MCF 10A (cell line): ENCODE measurements at regions of chr7 and their contacts with region 1.

Region 1: DNA sequence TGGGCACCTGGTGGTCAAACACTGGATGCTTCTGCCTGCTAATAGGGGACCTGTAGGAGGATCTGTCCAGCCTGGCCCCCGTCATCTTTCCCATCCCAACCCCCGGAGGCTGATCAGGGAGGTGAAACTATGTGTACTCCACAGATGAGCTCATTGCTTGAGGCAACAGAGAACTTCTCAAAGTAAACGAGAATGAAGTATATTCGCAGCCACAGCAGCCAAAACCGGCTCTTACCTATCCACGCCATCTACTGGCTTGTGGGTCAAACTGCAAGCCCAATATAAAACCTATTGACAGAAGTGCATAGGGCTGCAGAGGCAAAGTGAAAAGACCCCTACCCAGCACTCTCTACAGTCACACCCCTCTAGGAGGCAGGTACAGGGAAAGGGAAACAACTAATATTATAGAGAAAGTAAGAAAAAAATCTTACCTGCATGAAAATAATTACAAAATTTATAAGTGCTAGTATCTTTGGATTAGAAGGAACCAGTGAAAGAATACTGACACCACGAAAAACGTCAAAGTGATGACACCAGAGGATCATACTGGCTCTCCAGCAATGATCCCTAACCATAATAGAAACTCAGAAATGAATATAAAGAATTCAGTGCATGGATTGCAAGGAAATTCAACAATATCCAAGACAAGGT is 973.5 kb downstream of the ANKRD7 start:
- DNase-seq: peak; percentile 56
- H3K4me3 Mint-ChIP-seq: no peak overlapping the region
- H3K27ac Mint-ChIP-seq: no peak overlapping the region
- H3K4me1 Mint-ChIP-seq: no peaks in the 10 kb centered on the region
- H3K27me3 Mint-ChIP-seq: peaks cover 68% of the 10 kb centered on the region
- CTCF ChIP-seq: peak; percentile 70

Region 2: DNA sequence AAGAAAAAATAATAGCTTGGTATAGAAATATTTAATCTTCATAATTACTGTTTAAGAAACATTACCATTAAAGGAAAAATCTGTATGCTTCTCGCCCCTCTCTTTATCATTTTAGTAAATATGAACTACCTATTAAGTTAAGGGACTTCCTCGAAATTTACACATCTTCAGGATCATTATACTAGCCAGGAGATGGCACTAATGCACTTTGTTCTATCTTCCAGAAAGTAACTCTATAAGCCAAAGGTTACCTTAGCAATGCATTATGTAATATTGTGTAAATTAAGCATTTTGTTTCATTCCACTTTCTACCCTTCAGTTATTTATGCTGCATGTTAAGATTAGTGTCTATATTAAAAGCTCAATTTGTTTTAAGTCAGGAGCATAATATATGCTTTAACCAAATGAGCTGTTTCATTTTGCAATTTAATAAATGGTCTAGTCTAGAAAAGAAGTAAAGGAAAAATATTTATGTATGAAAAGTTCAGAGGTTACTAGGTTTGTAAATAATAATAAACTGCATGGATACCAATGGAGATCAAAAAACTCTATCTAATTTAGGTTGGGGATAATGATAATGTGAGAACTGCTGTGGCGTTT is 845.0 kb before region 1 on chr7:
- CTCF ChIA-PET with region 1: interaction called, 7 read pairs
- POLR2A ChIA-PET with region 1: no interaction called
- intact Hi-C with region 1: loop called (anchors 1 kb)
- DNase-seq: peak; percentile 42
- H3K4me3 Mint-ChIP-seq: no peak overlapping the region
- H3K27ac Mint-ChIP-seq: no peak overlapping the region
- H3K4me1 Mint-ChIP-seq: peaks cover 6% of the 10 kb centered on the region
- H3K27me3 Mint-ChIP-seq: no peaks in the 10 kb centered on the region
- CTCF ChIP-seq: peak; percentile 46

Region 3: DNA sequence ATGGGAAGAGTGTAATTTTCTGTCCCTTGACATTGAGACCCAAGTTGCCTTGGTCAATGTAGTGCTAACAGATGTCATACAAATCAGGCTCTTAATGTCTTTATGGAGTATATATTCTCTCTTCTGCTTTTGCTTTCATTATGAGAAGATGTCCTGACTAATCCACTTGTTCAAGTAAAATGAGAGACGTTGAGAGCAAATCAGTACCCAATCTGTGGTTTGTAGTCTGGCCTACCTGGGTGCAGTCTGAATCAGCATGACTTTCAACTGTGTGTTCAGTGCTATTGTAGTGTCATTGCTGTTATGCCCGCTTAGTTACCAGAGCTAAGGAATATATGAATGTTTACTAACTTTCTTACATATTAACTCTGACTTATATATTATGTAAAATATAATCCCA is 361.1 kb before region 1 on chr7:
- CTCF ChIA-PET with region 1: no interaction called
- POLR2A ChIA-PET with region 1: no interaction called
- intact Hi-C with region 1: no loop called
- DNase-seq: no peak
- H3K4me3 Mint-ChIP-seq: no peak overlapping the region
- H3K27ac Mint-ChIP-seq: no peak overlapping the region
- H3K4me1 Mint-ChIP-seq: no peaks in the 10 kb centered on the region
- H3K27me3 Mint-ChIP-seq: peaks cover 30% of the 10 kb centered on the region
- CTCF ChIP-seq: no peak

Region 4: DNA sequence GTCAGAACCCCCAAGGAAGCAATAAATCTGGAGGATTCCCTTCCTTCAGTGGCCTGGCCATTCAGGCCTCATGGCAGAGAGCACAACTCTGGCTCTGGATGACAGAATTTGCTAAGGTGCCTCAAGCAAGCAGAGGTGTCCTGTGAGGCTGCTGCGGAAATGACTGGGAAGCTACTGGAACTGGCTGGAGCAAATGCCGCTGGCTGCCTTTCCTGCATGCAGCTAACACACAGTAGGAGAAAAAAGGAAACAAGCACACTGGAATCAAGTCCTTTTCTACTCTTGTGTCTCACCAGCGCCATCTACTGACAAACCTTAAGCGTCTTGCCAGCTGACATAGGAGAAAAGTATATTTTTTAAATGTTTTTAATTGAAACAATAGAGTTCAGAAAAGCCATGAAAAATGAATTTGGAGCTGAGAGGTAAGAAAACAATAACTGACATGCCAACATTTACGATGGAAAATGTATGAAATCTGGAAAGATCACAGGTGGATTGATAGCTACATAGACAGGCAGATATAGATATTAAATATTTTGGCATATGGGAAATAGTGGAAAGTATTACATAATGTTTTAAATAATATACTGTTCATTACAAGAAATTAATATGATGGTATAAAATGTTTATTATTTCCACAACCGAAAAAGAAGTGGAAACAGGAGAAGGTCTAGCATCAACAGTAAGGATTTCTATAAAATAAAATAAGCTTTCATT is 21.9 kb before region 1 on chr7:
- CTCF ChIA-PET with region 1: interaction called, 14 read pairs
- POLR2A ChIA-PET with region 1: no interaction called
- intact Hi-C with region 1: no loop called
- DNase-seq: peak; percentile 79
- H3K4me3 Mint-ChIP-seq: no peak overlapping the region
- H3K27ac Mint-ChIP-seq: no peak overlapping the region
- H3K4me1 Mint-ChIP-seq: no peaks in the 10 kb centered on the region
- H3K27me3 Mint-ChIP-seq: peaks cover 75% of the 10 kb centered on the region
- CTCF ChIP-seq: peak; percentile 78

Region 5: DNA sequence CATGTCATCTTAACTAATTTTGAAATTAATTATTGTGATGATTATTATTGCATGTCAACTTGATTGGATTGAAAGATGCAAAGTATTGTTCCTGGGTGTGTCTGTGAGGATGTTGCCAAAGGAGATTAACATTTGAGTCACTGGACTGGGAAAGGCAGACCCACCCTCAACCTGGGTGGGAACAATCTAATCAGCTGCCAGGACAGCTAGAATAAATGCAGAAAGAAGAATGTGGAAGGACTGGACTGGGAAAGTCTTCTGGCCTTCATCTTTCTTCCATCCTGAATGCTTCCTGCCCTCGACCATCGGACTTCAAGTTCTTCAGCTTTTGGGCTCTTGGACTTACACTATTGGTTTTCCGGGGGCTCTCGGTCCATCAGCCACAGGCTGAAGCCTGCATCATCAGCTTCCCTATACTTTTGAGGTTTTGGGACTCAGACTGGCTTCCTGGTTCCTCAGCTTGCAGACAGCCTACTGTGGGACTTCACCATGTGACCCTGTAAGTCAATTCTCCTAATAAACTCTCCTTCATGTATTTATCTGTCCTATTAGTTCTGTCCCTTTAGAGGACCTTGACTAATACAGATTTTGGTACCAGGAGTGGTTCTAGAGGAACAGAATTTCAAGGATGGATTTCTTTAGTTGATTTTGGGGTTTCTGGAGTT is 13.7 kb before region 1 on chr7:
- CTCF ChIA-PET with region 1: interaction called, 10 read pairs
- POLR2A ChIA-PET with region 1: interaction called, 4 read pairs
- intact Hi-C with region 1: no loop called
- DNase-seq: no peak
- H3K4me3 Mint-ChIP-seq: no peak overlapping the region
- H3K27ac Mint-ChIP-seq: no peak overlapping the region
- H3K4me1 Mint-ChIP-seq: no peaks in the 10 kb centered on the region
- H3K27me3 Mint-ChIP-seq: peaks cover 39% of the 10 kb centered on the region
- CTCF ChIP-seq: no peak